Caco-2 (cell line): ENCODE measurements at regions of chr2 and their contacts with region 1.

Region 1: GRCh38 chr2:71361631-71362030 is 30.0 kb downstream of the ZNF638 start:
- DNase-seq: no peak
- H3K4me3 ChIP-seq: no peak overlapping the region
- H3K4me3 Mint-ChIP-seq: no peak overlapping the region
- H3K27ac Mint-ChIP-seq: no peak overlapping the region
- H3K4me1 ChIP-seq: 0 out of 2 replicates have a peak, but pooled peaks cover 4% of the 10 kb centered on the region
- H3K4me1 Mint-ChIP-seq: peaks cover 37% of the 10 kb centered on the region
- H3K27me3 ChIP-seq: no peaks in the 10 kb centered on the region
- H3K27me3 Mint-ChIP-seq: no peaks in the 10 kb centered on the region
- CTCF ChIP-seq: no peak

Region 2: GRCh38 chr2:70897203-70897976 is 464.2 kb before region 1 on chr2:
- CTCF ChIA-PET with region 1: no interaction called
- POLR2A ChIA-PET with region 1: no interaction called
- intact Hi-C with region 1: loop called (anchors 5 kb)
- DNase-seq: no peak
- H3K4me3 ChIP-seq: no peak overlapping the region
- H3K4me3 Mint-ChIP-seq: no peak overlapping the region
- H3K27ac Mint-ChIP-seq: no peak overlapping the region
- H3K4me1 ChIP-seq: peaks cover 3% of the 10 kb centered on the region; the same call in 1 of the 2 replicates
- H3K4me1 Mint-ChIP-seq: no peaks in the 10 kb centered on the region
- H3K27me3 ChIP-seq: no peaks in the 10 kb centered on the region
- H3K27me3 Mint-ChIP-seq: peaks cover 16% of the 10 kb centered on the region
- CTCF ChIP-seq: no peak

Region 3: GRCh38 chr2:71340176-71340575 is 21.5 kb before region 1 on chr2:
- CTCF ChIA-PET with region 1: no interaction called
- POLR2A ChIA-PET with region 1: no interaction called
- intact Hi-C with region 1: no loop called
- DNase-seq: no peak
- H3K4me3 ChIP-seq: no peak overlapping the region
- H3K4me3 Mint-ChIP-seq: no peak overlapping the region
- H3K27ac Mint-ChIP-seq: no peak overlapping the region
- H3K4me1 ChIP-seq: peaks cover 8% of the 10 kb centered on the region; the same call in 1 of the 2 replicates
- H3K4me1 Mint-ChIP-seq: peaks cover 20% of the 10 kb centered on the region
- H3K27me3 ChIP-seq: no peaks in the 10 kb centered on the region
- H3K27me3 Mint-ChIP-seq: no peaks in the 10 kb centered on the region
- CTCF ChIP-seq: no peak